CD4-positive, alpha-beta memory T cell (primary cell): ENCODE measurements at regions of chr14 and their contacts with region 1.

Region 1: DNA sequence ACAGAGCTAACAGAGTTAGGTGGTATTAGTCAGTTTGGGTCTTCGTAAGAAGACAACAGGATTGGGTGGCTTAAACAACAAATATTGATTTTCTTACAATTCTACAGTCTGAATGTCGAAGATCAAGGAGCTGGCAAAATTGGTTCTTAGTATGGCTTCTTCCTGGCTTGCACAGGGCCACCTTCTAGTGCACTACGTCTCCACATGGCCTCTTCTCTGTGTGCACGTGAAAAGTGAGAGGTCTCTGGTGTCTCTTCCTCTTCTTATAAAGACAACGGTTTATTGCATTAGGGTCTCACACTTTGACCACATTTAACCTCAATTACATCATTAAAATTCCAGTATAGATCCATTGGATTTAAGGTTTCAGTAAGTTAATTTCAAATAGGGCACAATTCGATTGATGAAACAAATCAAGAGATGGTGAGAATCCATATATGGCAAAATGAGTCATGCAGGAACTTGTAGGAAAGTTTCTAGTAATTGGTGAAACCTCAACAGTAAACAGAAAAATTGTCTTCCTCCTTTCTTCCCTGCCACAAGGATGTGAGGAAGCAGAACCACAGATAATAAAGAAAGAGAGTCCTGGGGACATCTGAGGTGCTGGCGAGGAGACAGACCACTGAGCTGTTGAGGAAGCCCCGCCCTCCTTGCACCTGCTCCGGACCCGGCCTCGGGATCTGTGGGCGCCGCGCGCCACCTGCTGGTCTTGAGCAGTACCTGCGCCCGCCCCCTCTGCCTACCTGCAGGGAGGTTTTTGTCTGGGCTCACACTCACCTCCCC is 846.7 kb downstream of the TMEM121 start:
- DNase-seq: peak; percentile 65 to 78 (median 71)
- H3K4me3 ChIP-seq: peak overlapping the region in 1 of 2 donors; percentile 21
- H3K4me3 Mint-ChIP-seq: peak overlapping the region in 7 of 8 donors; percentile 14 to 74 (median 45)
- H3K27ac ChIP-seq: no peak overlapping the region
- H3K27ac Mint-ChIP-seq: peak overlapping the region in 6 of 7 donors; percentile 9 to 73 (median 45)
- H3K4me1 ChIP-seq: peaks cover 17% of the 10 kb centered on the region
- H3K4me1 Mint-ChIP-seq: peaks cover 4 to 24% (median 19%) of the 10 kb centered on the region in 4 donors
- H3K27me3 ChIP-seq: no peaks in the 10 kb centered on the region
- H3K27me3 Mint-ChIP-seq: peaks cover 0 to 1% of the 10 kb centered on the region in 2 donors

Region 2: DNA sequence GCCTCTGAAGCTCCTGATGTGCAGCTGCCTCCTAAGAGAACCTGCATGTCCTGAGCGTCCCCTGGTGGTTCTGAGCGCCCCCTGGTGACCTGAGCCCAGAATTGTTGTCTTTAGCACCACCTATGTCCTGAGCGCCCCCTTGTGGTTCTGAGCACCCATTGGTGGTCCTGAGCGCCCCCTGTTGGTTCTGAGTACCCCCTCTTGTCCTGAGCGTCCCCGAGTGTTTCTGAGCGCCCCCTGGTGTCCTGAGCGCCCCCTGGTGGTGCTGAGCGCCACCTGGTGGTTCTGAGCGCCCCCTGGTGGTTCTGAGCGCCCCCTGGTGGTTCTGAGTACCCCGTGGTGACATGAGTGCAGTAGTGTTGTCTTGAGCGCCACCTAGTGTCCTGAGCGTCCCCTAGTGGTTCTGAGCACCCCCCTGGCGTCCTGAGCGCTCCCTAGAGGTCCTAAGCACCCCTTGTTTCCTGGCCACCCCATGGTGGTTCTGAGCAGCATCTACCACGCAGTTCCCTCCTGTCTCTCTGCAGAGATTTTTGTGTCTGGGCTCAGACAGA is 64.1 kb before region 1 on chr14:
- CTCF ChIA-PET with region 1: interaction called, 5 read pairs
- POLR2A ChIA-PET with region 1: no interaction called
- intact Hi-C with region 1: loop called (anchors 10 kb)
- DNase-seq: peak; percentile 56 to 79 (median 68)
- H3K4me3 ChIP-seq: no peak overlapping the region
- H3K4me3 Mint-ChIP-seq: peak overlapping the region in 5 of 8 donors; percentile 4 to 71 (median 33)
- H3K27ac ChIP-seq: no peak overlapping the region
- H3K27ac Mint-ChIP-seq: peak overlapping the region in 5 of 7 donors; percentile 62 to 97 (median 91)
- H3K4me1 ChIP-seq: no peaks in the 10 kb centered on the region
- H3K4me1 Mint-ChIP-seq: peaks cover 0 to 7% (median 0%) of the 10 kb centered on the region in 4 donors
- H3K27me3 ChIP-seq: no peaks in the 10 kb centered on the region
- H3K27me3 Mint-ChIP-seq: peaks cover 4 to 29% of the 10 kb centered on the region in 2 donors

Region 3: DNA sequence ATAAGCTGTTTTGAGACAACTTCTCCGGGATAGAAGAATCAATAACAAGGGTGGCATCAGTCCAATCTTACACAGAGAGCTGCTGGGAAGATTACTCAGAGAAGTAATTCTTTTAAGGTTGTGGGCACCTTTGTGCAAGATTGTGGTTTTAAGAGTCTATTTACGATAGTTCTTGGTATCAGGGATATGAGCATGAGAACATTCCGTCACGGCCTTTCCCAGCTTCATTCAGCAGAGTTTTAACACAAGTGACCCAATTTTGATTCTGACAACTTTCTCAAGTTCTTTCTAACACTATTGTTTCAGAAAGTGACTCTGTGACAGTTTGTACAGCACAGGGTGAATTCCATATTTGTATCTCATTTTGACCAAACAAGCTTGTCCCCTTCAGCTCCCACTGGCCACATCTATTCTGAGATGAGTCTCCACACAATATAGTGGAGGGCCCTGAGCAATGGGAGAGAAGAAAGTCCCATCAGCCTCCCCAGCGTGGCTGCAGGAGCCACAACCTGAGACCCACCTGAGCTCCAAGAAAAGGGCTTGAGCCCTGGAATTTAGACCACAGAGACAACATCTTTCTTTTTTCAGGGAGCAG is 22.5 kb after region 1 on chr14:
- CTCF ChIA-PET with region 1: interaction called, 11 read pairs
- POLR2A ChIA-PET with region 1: interaction called, 4 read pairs
- intact Hi-C with region 1: no loop called
- DNase-seq: peak in 4 of 5 donors; percentile 36 to 60 (median 52)
- H3K4me3 ChIP-seq: no peak overlapping the region
- H3K4me3 Mint-ChIP-seq: peak overlapping the region; percentile 29 to 90 (median 74)
- H3K27ac ChIP-seq: peak overlapping the region; percentile 38
- H3K27ac Mint-ChIP-seq: peak overlapping the region; percentile 56 to 95 (median 91)
- H3K4me1 ChIP-seq: peaks cover 27% of the 10 kb centered on the region
- H3K4me1 Mint-ChIP-seq: peaks cover 20 to 51% (median 38%) of the 10 kb centered on the region in 4 donors
- H3K27me3 ChIP-seq: no peaks in the 10 kb centered on the region
- H3K27me3 Mint-ChIP-seq: peaks cover 4 to 12% of the 10 kb centered on the region in 2 donors

Region 4: GRCh38 chr14:106417224-106418049 is 44.4 kb after region 1 on chr14:
- CTCF ChIA-PET with region 1: interaction called, 22 read pairs
- POLR2A ChIA-PET with region 1: no interaction called
- intact Hi-C with region 1: no loop called
- DNase-seq: peak; percentile 55 to 87 (median 72)
- H3K4me3 ChIP-seq: no peak overlapping the region
- H3K4me3 Mint-ChIP-seq: peak overlapping the region in 2 of 8 donors; percentile 36 to 59
- H3K27ac ChIP-seq: no peak overlapping the region
- H3K27ac Mint-ChIP-seq: peak overlapping the region in 5 of 7 donors; percentile 37 to 91 (median 81)
- H3K4me1 ChIP-seq: no peaks in the 10 kb centered on the region
- H3K4me1 Mint-ChIP-seq: peaks cover 0 to 7% (median 3%) of the 10 kb centered on the region in 4 donors
- H3K27me3 ChIP-seq: no peaks in the 10 kb centered on the region
- H3K27me3 Mint-ChIP-seq: peaks cover 0 to 12% of the 10 kb centered on the region in 2 donors